HEK293 (cell line): ENCODE measurements at regions of chr5 and their contacts with region 1.

Region 1: GRCh38 chr5:140710899-140711552 is 10.8 kb downstream of the ZMAT2 start:
- H3K4me3 ChIP-seq: peak overlapping the region; percentile 56
- H3K27ac ChIP-seq: peak overlapping the region; percentile 50
- H3K4me1 ChIP-seq: no peaks in the 10 kb centered on the region
- CTCF ChIP-seq: no peak

Region 2: GRCh38 chr5:140725799-140726471 is 14.9 kb after region 1 on chr5:
- CTCF ChIA-PET with region 1: interaction called, 11 read pairs
- POLR2A ChIA-PET with region 1: interaction called, 20 read pairs
- H3K4me3 ChIP-seq: peak overlapping the region; percentile 42
- H3K27ac ChIP-seq: no peak overlapping the region
- H3K4me1 ChIP-seq: no peaks in the 10 kb centered on the region
- CTCF ChIP-seq: no peak

Region 3: GRCh38 chr5:141084487-141084990 is 373.5 kb after region 1 on chr5:
- CTCF ChIA-PET with region 1: no interaction called
- POLR2A ChIA-PET with region 1: no interaction called
- H3K4me3 ChIP-seq: peak overlapping the region; percentile 40
- H3K27ac ChIP-seq: no peak overlapping the region
- H3K4me1 ChIP-seq: no peaks in the 10 kb centered on the region
- CTCF ChIP-seq: no peak

Region 4: DNA sequence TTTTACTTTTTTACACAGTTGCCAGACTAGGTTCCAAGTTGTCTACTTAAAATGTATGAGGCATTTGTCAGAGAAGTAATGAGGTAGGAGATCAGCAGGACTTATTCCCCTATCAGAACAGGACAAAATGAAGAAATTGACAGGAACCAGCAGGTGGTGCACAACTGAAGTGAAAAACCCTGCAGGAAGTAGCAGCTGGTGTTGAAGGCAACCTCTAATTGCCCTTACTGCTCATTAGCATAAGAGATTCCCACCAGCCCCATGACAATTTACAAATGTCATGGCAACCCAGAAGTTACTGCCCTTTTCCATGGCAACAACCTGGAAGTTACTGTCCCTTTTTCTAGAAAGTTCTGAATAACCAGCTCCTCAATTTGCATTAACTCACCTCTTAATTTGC is 539.5 kb after region 1 on chr5:
- CTCF ChIA-PET with region 1: no interaction called
- POLR2A ChIA-PET with region 1: no interaction called
- H3K4me3 ChIP-seq: no peak overlapping the region
- H3K27ac ChIP-seq: no peak overlapping the region
- H3K4me1 ChIP-seq: no peaks in the 10 kb centered on the region
- CTCF ChIP-seq: no peak